ENCODE measurements at regions of chr12 and their contacts with region 1.

Region 1: DNA sequence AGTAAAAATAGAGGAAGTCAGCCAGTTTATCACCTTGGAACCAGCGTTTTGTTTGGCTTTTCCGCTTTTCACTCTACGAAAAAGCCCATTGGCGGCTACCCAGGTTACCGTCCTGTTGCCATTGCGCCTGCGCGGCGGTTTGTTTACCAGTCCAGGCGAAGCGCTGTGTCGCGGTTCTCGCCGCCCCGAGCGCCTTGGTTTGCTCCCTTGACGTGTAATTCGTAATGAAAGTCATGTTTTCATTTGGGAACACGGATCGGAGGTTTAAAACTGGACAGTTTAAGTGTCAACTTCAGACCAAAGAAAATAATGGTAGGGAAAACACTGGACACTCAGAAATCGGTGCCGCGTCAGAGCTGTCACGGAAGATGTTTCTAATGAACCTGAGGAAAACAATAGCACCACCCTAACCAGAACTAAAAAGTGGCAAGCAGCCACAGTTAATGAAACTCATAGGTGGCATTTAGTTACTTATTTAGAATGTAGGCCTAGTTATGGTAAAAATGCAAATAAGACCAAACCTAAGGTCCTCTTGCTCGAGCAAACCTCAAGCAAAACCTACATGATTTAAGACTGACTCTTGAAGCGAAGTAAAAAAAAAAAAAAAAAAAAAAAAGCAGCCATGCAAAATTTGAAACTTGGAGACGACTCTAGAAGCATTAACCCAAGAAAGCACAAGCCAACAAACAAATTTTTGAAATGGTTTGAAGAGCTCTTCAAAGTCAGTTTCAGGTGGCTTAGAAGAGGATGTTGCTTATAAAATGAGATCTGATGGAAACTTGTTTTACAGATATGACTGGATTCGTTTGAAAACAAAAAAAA is 790 bp upstream of the GPR19 start:
- DNase-seq: peak; percentile 94
- ATAC-seq: peak; percentile 80
- H3K4me3 Mint-ChIP-seq: peak overlapping the region; percentile 83
- H3K27ac Mint-ChIP-seq: peak overlapping the region; percentile 99
- H3K4me1 Mint-ChIP-seq: peaks cover 53% of the 10 kb centered on the region
- H3K27me3 Mint-ChIP-seq: no peaks in the 10 kb centered on the region

Region 2: GRCh38 chr12:11535127-11535526 is 1161.6 kb before region 1 on chr12:
- CTCF ChIA-PET with region 1: no interaction called
- POLR2A ChIA-PET with region 1: no interaction called
- intact Hi-C with region 1: no loop called
- DNase-seq: no peak
- ATAC-seq: no peak
- H3K4me3 Mint-ChIP-seq: no peak overlapping the region
- H3K27ac Mint-ChIP-seq: no peak overlapping the region
- H3K4me1 Mint-ChIP-seq: no peaks in the 10 kb centered on the region
- H3K27me3 Mint-ChIP-seq: no peaks in the 10 kb centered on the region

Region 3: GRCh38 chr12:12376646-12377448 is 319.9 kb before region 1 on chr12:
- CTCF ChIA-PET with region 1: interaction called, 25 read pairs
- POLR2A ChIA-PET with region 1: no interaction called
- intact Hi-C with region 1: loop called in 1 of 2 experiments (anchors 2 kb)
- DNase-seq: peak; percentile 27
- ATAC-seq: peak; percentile 75
- H3K4me3 Mint-ChIP-seq: no peak overlapping the region
- H3K27ac Mint-ChIP-seq: peak overlapping the region; percentile 45
- H3K4me1 Mint-ChIP-seq: peaks cover 37% of the 10 kb centered on the region
- H3K27me3 Mint-ChIP-seq: no peaks in the 10 kb centered on the region

Region 4: GRCh38 chr12:12505544-12506495 is 191.0 kb before region 1 on chr12:
- CTCF ChIA-PET with region 1: interaction called, 3 read pairs
- POLR2A ChIA-PET with region 1: interaction called, 5 read pairs
- intact Hi-C with region 1: loop called in 1 of 2 experiments (anchors 2 kb)
- DNase-seq: peak; percentile 51
- ATAC-seq: peak; percentile 79
- H3K4me3 Mint-ChIP-seq: peak overlapping the region; percentile 55
- H3K27ac Mint-ChIP-seq: peak overlapping the region; percentile 96
- H3K4me1 Mint-ChIP-seq: peaks cover 55% of the 10 kb centered on the region
- H3K27me3 Mint-ChIP-seq: no peaks in the 10 kb centered on the region

Region 5: DNA sequence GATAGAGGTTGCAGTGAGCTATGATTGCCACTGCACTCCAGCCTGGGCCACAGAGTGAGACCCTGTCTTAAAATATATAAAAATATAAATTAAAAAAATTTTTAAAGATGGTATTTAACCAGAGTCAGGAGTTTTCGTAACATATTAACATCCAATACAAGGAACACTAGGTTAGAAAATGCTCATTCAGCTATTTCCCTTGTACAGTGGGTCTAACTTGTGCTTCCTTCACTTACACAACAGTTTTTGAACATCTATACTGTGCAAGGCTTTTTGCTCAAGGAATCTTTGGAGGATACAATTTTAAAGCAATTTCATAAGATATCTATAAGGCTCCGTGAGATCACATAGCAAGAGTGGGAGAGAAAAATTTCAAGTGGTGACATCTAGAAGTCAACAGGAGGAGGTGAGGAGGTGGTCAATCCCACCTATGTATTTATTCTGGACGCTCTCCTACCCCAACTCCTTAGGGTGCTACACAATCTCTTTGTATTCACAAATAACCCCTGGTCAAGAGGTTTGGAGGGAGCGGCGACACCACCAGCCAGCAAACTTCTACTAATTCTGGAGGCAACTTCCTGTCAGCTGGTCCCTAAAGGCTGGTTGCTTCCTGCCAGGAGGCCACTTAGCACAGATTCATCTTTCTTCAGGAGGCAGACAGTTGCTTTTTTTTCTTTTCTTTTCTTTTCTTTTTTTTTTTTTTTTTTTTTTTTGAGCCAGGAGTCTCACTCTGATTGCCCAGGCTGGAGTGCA is 156.3 kb before region 1 on chr12:
- CTCF ChIA-PET with region 1: no interaction called
- POLR2A ChIA-PET with region 1: no interaction called
- intact Hi-C with region 1: no loop called
- DNase-seq: no peak
- ATAC-seq: no peak
- H3K4me3 Mint-ChIP-seq: no peak overlapping the region
- H3K27ac Mint-ChIP-seq: peak overlapping the region; percentile 61
- H3K4me1 Mint-ChIP-seq: peaks cover 24% of the 10 kb centered on the region
- H3K27me3 Mint-ChIP-seq: no peaks in the 10 kb centered on the region

Region 6: GRCh38 chr12:12645485-12645884 is 51.3 kb before region 1 on chr12:
- CTCF ChIA-PET with region 1: interaction called, 7 read pairs
- POLR2A ChIA-PET with region 1: no interaction called
- intact Hi-C with region 1: loop called in 1 of 2 experiments (anchors 2 kb)
- DNase-seq: peak; percentile 51
- ATAC-seq: peak; percentile 75
- H3K4me3 Mint-ChIP-seq: no peak overlapping the region
- H3K27ac Mint-ChIP-seq: peak overlapping the region; percentile 58
- H3K4me1 Mint-ChIP-seq: peaks cover 21% of the 10 kb centered on the region
- H3K27me3 Mint-ChIP-seq: no peaks in the 10 kb centered on the region

Region 7: DNA sequence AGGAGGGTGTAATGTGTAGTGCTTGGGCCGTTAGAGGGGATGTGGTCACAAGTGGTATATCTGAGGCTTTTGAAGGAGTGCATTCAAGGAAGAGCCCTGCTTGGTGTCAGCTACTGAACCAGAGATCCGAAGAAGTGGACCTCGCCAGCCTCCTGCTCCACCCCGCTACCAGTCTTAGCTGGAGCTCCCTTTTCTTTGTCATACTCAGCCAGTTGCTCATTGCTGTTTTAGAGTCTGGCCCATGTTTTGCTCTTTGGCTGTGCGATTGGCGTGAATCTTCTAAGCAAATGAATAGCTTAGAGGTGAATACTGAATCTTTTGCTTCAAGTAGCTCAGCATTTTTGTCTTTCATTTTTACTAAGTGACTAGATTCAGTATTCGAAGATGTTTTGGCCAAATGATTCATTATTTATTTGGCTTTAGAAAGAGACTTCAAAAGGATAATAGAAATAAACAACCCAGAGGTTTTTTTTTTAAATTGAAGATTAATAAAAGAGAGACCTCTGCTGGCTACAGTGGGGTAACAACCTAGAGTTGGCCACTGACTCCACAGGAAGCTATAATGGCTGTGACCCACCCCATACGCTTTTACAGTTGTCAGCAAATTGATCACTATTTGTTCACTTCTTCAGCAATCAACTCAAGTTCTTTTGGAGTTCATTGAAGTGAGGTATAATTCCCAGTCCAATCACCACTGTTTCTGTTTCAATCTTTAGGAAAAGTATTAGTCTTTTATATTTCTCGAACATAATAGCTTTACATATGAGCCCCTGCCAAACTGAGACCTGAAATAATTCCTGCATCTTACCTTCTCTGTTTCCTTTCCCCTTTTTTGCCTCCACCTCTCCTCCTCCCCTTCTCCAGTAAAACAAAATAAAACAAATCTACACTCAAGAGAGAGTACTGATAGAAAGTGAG is 40.2 kb after region 1 on chr12:
- CTCF ChIA-PET with region 1: interaction called, 13 read pairs
- POLR2A ChIA-PET with region 1: interaction called, 4 read pairs
- intact Hi-C with region 1: no loop called
- DNase-seq: peak; percentile 65
- ATAC-seq: peak; percentile 87
- H3K4me3 Mint-ChIP-seq: peak overlapping the region; percentile 32
- H3K27ac Mint-ChIP-seq: peak overlapping the region; percentile 75
- H3K4me1 Mint-ChIP-seq: peaks cover 35% of the 10 kb centered on the region
- H3K27me3 Mint-ChIP-seq: no peaks in the 10 kb centered on the region